ENCODE measurements at regions of chr2 and their contacts with region 1.

Region 1: DNA sequence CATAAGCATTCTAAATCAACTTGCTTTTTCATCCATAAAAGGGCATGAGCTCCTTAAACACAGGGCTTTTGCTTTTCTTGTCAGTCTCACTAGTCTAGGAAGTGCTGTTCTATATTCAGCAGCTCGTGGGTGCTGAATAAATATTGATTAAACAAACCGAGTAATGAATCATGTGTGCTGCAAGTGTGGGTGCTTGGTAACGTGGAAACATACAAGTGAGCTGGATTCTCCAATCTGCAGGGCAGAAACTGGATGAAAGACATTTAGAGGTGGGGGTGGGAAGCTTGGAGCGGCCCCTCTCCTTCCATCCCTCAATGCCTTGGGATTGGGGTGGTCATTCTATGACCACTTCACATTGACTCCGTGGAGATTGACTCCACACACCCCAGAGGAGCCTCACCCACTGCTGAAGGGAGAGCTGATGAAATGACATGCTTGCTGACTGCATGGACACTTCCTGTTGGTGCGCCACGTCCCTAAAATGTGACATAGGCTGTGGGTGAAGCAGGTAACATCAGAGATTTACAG is 114.6 kb downstream of the DOCK10 start:
- DNase-seq: peak; percentile 84
- ATAC-seq: peak; percentile 62
- H3K4me3 Mint-ChIP-seq: peak overlapping the region; percentile 60
- H3K27ac Mint-ChIP-seq: peak overlapping the region; percentile 98
- H3K4me1 Mint-ChIP-seq: peaks cover 99% of the 10 kb centered on the region
- H3K27me3 Mint-ChIP-seq: no peaks in the 10 kb centered on the region

Region 2: GRCh38 chr2:223944703-223945531 is 982.8 kb before region 1 on chr2 and contains the start of gene WDFY1:
- CTCF ChIA-PET with region 1: interaction called, 3 read pairs
- POLR2A ChIA-PET with region 1: no interaction called
- intact Hi-C with region 1: loop called (anchors 5 kb)
- DNase-seq: peak; percentile 90
- ATAC-seq: peak; percentile 52
- H3K4me3 Mint-ChIP-seq: peak within 1 kb of the TSS; percentile 90
- H3K27ac Mint-ChIP-seq: peak within 1 kb of the TSS; percentile 90
- H3K4me1 Mint-ChIP-seq: peaks cover 62% of the 10 kb centered on the region
- H3K27me3 Mint-ChIP-seq: peaks cover 1% of the 10 kb centered on the region
- total RNA-seq, gene WDFY1: 33.6 to 37.5 TPM

Region 3: GRCh38 chr2:224885836-224886547 is 41.7 kb before region 1 on chr2:
- CTCF ChIA-PET with region 1: interaction called, 3 read pairs
- POLR2A ChIA-PET with region 1: interaction called, 3 read pairs
- intact Hi-C with region 1: loop called (anchors 1 kb)
- DNase-seq: no peak
- ATAC-seq: peak; percentile 81
- H3K4me3 Mint-ChIP-seq: peak overlapping the region; percentile 24
- H3K27ac Mint-ChIP-seq: peak overlapping the region; percentile 76
- H3K4me1 Mint-ChIP-seq: peaks cover 65% of the 10 kb centered on the region
- H3K27me3 Mint-ChIP-seq: no peaks in the 10 kb centered on the region

Region 4: GRCh38 chr2:224938651-224939182 is 11.0 kb after region 1 on chr2:
- CTCF ChIA-PET with region 1: interaction called, 53 read pairs
- POLR2A ChIA-PET with region 1: interaction called, 56 read pairs
- intact Hi-C with region 1: loop called (anchors 1 kb)
- DNase-seq: peak; percentile 54
- ATAC-seq: peak; percentile 72
- H3K4me3 Mint-ChIP-seq: peak overlapping the region; percentile 68
- H3K27ac Mint-ChIP-seq: peak overlapping the region; percentile 92
- H3K4me1 Mint-ChIP-seq: peaks cover 85% of the 10 kb centered on the region
- H3K27me3 Mint-ChIP-seq: no peaks in the 10 kb centered on the region

Region 5: GRCh38 chr2:225002039-225002655 is 74.4 kb after region 1 on chr2:
- CTCF ChIA-PET with region 1: interaction called, 8 read pairs
- POLR2A ChIA-PET with region 1: interaction called, 3 read pairs
- intact Hi-C with region 1: loop called (anchors 1 to 2 kb)
- DNase-seq: peak; percentile 76
- ATAC-seq: peak; percentile 72
- H3K4me3 Mint-ChIP-seq: peak overlapping the region; percentile 5
- H3K27ac Mint-ChIP-seq: peak overlapping the region; percentile 83
- H3K4me1 Mint-ChIP-seq: peaks cover 84% of the 10 kb centered on the region
- H3K27me3 Mint-ChIP-seq: no peaks in the 10 kb centered on the region

Region 6: GRCh38 chr2:225041851-225042799 is 114.4 kb after region 1 on chr2 and contains the start of gene DOCK10:
- CTCF ChIA-PET with region 1: interaction called, 4 read pairs
- POLR2A ChIA-PET with region 1: interaction called, 5 read pairs
- intact Hi-C with region 1: loop called (anchors 1 kb)
- DNase-seq: peak; percentile 76
- ATAC-seq: peak; percentile 20
- H3K4me3 Mint-ChIP-seq: peak within 1 kb of the TSS; percentile 97
- H3K27ac Mint-ChIP-seq: peak within 1 kb of the TSS; percentile 98
- H3K4me1 Mint-ChIP-seq: peaks cover 50% of the 10 kb centered on the region
- H3K27me3 Mint-ChIP-seq: peaks cover 3% of the 10 kb centered on the region
- total RNA-seq, gene DOCK10: 177 to 196 TPM

Region 7: DNA sequence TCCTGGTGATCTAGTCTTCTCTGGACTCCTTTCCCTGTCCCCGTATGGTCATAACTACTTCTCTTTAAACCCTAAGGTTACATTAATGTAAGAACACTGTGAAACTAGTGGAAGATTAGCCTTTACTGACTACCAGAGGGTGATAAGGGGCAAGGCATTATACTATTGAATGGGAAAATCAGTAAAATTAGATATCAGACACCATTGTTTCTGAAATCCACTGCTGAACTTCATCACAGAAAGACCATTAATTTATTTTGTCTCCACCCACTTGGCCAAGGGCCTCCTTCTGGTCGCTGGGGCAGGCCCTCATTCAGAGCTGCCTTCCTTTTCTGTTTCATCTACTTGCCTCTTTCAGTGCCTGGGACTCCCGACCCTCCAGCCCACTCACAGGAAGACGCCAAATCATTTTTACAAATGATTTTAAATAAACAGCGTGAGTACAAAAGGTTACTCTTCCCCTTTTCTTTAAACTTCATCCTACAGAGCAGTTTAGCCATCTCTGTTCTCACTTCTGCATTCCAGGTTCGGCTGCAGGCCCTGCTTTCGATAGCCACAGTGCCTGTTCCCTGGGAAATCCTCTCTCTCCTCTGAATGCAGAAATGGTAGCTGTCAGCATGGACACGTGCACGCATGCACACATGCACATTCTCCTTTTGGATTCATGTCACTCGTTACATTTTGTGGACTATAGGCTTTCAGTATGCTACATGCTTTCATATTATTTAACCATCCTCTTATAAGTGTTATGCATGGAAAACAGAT is 184.8 kb after region 1 on chr2:
- CTCF ChIA-PET with region 1: no interaction called
- POLR2A ChIA-PET with region 1: no interaction called
- intact Hi-C with region 1: no loop called
- DNase-seq: no peak
- ATAC-seq: no peak
- H3K4me3 Mint-ChIP-seq: no peak overlapping the region
- H3K27ac Mint-ChIP-seq: no peak overlapping the region
- H3K4me1 Mint-ChIP-seq: peaks cover 5% of the 10 kb centered on the region
- H3K27me3 Mint-ChIP-seq: no peaks in the 10 kb centered on the region

Measured in activated CD4-positive, alpha-beta T cell treated with anti-CD3 and anti-CD28 coated beads for 36 hours (primary cell).